GM10248 (cell line): ENCODE measurements at regions of chr1 and their contacts with region 1.

Region 1: DNA sequence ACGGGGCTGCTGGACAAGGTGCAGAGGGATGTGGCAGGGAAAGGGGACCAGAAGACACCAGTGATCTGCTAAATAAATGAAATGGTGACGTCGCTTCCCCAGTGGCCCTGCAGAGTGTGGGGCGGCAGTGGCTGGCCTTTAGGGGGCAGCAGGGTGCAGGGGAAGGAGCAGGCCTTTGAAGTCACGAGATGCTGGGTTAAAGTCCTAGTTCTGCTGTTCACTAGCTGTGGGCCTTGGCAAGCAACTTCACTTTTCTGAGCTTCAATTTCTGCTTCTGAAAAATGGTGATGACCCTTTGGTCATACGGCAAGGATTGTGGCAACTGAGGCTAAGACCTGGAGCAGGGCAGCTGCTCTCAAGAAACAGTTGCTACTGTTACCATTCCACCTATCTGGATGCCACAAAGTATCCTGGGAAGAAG is 9.2 kb upstream of the GALE start:
- DNase-seq: peak; percentile 86
- CTCF ChIP-seq: peak; percentile 97

Region 2: DNA sequence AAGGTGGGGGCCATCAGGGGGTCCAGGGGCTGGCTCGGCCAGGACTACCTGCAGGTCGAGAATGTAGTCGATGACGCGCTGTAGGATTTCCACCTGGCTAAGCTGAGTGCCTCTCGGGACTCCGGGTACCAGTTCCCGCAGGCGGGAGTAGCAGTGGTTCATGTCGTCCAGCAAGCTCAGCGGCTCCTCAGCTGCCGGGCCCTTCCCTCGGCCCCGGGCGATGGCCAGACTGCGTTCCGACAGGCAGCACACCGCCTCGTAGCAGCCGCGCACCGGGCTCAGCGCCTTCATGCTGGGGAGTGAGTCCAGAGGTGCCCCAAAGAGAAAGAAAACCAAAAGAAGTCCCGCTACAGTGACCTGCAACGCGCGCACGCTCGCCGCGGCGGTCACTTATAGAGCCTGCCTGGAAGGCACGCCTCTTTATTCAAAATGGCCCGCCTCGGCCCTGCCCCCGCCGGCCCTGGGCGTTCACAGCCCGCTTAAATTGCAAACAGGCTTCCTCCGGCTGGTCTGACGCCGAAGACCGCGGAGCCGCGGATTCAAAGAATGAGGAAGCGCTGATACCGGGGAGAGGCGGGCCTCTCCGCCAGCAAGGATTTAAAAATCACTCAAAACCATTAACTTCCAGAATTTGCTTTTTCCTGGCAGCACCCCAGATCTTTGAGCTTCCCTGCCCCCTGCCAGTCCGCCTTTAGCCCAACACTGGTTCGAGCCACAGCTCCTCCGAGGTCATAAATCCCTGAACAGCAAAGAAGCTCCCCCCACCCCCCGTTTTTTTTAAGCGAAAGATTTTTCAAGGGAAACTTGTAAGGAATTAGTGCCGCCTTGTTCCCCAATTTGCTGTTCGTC is 250.4 kb before region 1 on chr1 and contains the start of gene ID3:
- CTCF ChIA-PET with region 1: no interaction called
- POLR2A ChIA-PET with region 1: no interaction called
- DNase-seq: peak; percentile 89
- CTCF ChIP-seq: no peak

Region 3: DNA sequence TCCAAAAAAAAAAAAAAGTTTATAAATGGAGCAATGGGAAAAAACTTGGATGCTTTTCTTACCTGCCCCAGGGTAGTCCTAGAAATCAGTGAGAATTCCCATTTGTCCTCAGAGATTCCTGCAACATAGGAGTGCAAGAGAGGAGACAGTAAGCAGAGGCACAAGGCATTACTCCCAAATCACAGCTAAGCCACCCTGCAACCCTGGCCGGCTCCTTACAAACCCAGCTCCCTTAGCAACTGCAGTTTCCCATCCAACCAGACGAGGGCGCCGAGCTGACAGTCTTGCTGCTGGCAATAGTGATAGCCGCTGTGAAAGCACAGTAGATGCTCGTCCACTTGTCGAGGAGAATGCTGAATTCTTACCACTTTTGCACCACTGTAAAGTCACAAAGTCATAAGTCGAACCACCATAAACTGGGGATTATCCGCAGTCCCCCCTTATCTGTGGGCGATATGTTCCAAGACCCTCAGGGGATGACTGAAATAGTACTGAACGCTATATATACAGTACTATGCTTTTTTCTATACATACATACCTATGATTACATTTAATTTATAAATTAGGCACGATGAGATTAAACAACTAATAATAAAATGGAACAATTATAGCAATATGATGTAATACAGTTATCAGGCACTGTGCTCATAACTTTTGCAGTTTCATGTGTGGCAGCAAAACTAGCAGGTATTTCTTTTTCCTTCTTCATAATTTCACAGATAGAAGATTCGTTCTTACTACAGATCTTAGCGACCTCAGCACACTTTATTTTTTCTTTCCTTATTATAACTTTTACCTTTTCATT is 37.5 kb before region 1 on chr1:
- CTCF ChIA-PET with region 1: interaction called, 35 read pairs
- POLR2A ChIA-PET with region 1: interaction called, 6 read pairs
- DNase-seq: peak; percentile 77
- CTCF ChIP-seq: peak; percentile 96

Region 4: DNA sequence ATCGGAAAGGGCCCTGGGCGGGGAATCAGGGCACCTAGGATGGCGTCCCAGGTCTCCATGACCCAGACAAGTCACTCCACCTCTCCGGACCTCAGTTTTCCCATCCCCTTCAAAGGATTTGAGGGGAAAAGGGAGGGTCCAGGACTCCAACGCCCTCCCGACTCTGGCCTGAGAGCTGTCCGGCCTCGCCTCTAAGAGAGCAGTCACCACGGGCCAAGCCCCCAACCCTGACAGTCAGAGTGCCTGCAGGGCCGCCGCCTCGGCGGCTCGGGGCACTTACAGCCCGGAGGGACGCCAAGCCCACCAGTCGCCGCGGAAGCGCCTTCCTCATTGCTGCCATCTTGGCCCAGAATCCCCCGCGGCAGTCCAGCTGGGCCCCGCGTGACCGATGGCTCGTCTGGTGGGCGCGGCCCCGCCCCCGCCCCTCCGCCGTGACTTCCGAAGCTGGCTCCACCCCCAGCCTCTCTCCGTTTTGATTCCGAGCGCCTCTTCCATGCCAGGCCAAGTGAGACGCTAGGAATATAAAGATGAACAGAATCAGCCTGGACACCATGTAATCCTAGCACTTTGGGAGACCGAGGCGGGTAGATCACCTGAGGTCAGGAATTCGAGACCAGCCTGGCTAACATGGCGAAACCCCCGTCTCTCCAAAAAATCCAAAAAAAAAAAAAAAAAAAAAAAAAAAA is 15.5 kb after region 1 on chr1 and contains the start of gene HMGCL:
- CTCF ChIA-PET with region 1: interaction called, 185 read pairs
- POLR2A ChIA-PET with region 1: interaction called, 7 read pairs
- DNase-seq: peak; percentile 95
- CTCF ChIP-seq: no peak

Region 5: DNA sequence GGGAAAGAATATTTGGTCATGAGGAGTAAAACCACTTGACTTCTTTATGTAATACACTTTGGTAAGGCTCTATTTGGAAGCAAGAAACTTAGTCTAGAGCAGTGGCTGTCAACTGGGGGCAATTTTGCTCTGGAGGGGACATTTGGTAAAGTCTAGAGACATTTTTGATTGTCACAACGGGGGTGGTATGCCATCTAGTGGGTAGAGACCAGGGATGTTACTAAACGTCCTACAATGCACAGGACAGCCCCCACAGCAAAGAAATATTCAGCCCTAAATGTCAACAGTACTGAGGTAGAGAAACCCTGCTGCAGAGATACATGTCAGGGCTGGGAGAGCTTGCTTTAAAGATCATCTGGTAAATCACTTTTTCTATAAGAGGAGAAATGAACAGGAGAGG is 44.8 kb after region 1 on chr1:
- CTCF ChIA-PET with region 1: interaction called, 12 read pairs
- POLR2A ChIA-PET with region 1: no interaction called
- DNase-seq: no peak
- CTCF ChIP-seq: no peak

Region 6: DNA sequence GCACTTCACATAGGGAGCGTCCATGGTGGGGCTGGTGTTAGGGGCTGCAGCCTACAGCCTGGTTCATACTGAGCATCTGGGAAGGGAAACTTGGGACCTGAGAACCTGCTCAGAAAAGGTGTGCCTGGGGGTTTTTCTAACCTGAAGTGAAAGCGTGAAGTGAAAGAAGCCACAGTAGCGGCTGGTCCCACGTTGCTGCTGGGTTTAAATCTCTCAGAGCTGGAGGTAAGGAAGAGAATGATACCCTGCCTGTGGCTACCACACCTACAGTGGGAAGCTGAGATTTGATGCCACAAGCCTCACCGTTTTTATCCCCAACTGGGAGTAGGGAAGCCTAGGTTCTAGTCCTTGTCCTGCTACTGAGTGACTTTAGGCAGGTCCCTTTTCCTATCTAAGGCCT is 79.3 kb after region 1 on chr1:
- CTCF ChIA-PET with region 1: interaction called, 27 read pairs
- POLR2A ChIA-PET with region 1: no interaction called
- DNase-seq: peak; percentile 63
- CTCF ChIP-seq: no peak

Region 7: DNA sequence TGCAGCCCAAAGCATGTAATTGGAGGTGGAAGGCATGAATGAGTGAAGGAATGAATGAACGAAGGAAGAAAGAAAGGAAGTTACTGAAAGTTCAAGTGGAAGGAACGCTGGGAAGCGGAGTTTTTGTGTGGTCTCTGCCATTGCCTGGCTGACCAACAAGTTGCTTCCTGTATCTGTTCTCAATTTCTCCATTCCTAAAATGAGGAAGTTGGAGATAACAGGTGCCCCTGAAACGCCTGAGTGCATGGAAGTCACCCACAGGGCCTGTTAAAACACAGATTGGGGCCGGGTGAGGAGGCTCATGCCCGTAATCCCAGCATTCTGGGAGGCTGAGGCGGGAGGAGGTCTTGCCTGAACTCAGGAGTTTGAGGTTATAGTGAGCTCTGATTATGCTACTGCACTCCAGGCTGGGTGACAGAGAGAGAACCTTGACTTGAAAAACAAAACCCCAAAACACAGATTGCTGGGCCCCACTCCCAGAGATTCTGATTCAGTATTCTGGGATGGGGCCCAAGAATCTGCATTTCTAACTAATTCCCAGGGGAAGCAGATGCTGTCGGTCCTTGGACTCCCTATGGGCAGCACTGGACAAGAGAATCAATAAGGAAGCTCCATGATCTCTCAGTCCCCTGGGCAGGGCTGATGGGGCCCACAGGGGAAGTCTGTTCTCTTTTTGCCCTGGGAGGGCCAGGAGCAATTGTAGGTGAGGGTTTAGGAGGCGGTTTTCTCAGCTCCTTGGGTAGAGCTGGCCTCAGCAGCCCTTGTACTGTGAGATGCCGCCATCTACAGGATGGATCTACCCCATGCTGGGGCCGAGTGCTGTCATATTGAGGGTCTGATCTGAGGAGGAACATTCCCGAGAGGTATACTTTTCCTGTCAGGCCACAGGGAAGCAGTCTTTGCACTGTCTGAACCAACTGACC is 106.7 kb after region 1 on chr1:
- CTCF ChIA-PET with region 1: interaction called, 180 read pairs
- POLR2A ChIA-PET with region 1: no interaction called
- DNase-seq: peak; percentile 87
- CTCF ChIP-seq: peak; percentile 74

Region 8: DNA sequence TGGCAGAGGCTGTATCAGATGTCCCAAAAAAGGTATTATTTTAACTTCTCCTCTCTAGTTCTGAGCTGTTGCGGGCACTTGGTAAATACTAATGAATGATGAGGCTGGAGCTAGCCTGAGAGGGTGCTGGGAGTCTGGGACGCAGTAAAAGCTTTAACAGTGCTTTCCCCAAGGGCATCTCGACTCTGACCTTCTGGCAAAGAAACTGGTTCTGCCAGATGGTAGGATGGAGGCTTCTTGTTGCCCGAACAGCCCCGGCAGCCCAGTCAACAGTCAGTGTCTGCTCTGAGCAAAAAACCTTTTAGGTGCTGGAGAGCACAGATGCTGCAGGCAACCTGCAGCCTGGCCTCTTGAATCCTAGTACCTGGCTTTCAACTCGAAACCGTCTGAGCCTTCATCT is 147.3 kb after region 1 on chr1:
- CTCF ChIA-PET with region 1: interaction called, 10 read pairs
- POLR2A ChIA-PET with region 1: no interaction called
- DNase-seq: no peak
- CTCF ChIP-seq: no peak

Region 9: DNA sequence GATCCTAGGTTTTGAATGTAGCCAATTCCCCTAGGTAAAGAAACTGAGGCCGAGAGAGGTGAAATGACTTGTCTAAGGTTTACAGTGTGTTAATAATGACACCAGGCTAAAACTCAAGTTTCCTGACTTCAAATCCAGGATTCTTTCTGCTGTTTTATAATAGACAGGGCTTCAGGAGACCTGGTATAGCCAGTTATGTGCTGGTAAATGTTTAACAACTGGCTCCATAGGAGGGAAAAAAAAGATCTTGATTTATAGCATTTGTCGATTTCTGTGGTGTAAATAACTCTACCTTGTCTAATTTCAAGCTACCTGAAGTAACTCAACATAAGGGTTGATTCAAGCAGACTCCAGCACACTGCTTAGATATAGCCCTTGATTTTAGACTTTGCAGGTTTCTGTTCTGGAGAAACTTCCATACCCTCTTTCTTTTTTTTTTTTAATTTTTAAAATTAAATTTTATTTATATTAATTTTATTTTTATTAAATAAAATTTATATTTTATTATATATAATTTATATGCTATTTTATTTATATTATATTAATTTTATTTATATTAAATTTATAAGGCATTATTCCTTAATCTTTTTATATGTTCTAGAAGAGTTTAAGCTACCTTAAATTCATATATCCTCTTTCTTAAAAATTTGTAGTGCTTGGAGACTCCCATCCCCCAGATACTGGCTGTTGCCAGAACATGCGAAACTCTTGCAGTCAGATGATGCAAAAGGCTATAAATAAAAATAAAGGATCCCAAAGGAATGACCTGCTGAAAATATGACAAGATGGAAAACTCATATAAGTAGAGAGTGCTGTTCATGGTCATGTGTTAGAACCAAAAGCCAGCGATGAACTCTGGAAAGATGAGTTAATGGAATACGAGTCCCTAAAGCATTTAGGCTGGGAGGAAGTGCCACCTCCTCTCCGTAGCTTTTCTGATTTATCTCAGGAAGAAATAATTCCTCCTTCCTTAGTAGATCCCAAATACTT is 205.8 kb after region 1 on chr1:
- CTCF ChIA-PET with region 1: no interaction called
- POLR2A ChIA-PET with region 1: no interaction called
- DNase-seq: no peak
- CTCF ChIP-seq: no peak